Heart right ventricle (tissue), 16 donors: ENCODE measurements at regions of chr22 and their contacts with region 1.

Region 1: GRCh38 chr22:22687638-22688500 is 43.5 kb downstream of the GGTLC2 start:
- DNase-seq: peak in 1 of 2 donors; percentile 47
- ATAC-seq: peak in 5 of 8 donors; percentile 71 to 82 (median 77)
- H3K4me3 ChIP-seq: no peak overlapping the region
- H3K27ac ChIP-seq: no peak overlapping the region
- H3K4me1 ChIP-seq: peaks cover 0 to 5% (median 0%) of the 10 kb centered on the region in 9 donors
- H3K27me3 ChIP-seq: no peaks in the 10 kb centered on the region
- CTCF ChIP-seq: peak; percentile 48 to 81 (median 77)

Region 2: DNA sequence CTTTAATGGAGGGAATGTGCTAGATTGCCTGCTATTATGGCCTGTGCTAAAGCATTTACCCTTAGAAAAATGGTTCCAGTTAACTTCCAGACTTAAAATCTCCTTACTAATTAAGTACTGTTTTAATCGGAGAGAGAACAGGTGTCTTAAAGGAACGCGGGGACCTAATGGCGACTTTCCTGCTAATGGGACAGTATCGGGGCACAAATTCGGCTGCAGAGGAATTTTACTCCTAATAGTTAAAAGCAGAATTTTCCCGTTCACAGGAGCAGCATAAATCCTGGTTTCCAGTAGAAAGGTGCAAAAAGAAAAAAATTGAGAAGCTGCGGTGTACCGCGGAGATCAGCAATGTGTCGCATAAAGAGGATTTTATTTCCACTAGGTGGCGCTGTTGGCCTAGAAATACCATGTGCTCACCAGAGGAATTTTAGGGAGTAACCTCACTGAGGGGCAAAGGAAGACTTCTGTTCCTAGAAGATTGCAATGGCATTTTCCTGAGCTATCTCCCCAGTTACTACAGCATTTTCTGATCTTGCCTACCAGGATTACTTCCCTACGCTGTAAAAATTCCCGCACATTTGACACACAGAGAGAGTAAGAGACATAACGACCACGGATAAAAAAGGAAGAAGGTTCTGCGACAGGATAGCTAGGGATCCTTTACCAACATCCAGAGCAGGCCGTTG is 223.9 kb before region 1 on chr22:
- intact Hi-C with region 1: loop called in 1 of 10 experiments (anchors 5 kb)
- DNase-seq: peak in 1 of 2 donors; percentile 51
- ATAC-seq: peak in 5 of 8 donors; percentile 55 to 68 (median 60)
- H3K4me3 ChIP-seq: no peak overlapping the region
- H3K27ac ChIP-seq: no peak overlapping the region
- H3K4me1 ChIP-seq: no peaks in the 10 kb centered on the region
- H3K27me3 ChIP-seq: peaks cover 0 to 67% (median 50%) of the 10 kb centered on the region in 7 donors
- CTCF ChIP-seq: peak; percentile 61 to 85 (median 72)

Region 3: DNA sequence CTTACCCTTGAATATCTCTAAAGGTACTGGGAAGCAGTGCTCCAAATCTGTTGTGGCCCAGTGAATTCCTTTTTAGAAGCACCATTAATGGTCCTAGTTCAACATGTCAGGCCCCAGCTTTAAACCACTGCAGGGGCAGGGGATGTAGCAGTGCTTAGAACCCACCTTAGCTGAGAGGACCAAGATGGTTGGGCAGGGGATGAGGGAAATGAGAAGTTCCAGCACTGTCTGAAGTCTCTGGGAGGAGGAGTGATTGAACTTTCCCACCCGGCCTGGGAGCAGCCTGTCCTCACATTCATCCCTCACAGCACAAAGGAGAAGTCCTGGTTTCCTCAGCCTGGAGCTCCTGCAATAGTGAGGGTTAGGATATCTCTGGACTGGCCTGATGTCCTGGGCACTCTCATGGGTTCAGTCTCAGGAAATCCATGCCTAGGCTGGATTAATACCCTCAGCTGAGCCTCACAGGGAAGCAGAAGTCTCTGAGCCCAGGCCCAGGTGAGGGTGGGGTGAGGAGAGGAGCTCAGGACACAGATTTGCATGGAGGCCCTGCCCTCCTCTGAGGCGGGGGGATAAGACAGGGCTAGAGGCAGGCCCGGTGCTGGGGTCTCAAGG is 100.2 kb before region 1 on chr22:
- intact Hi-C with region 1: loop called in 6 of 10 experiments (anchors 5 to 10 kb)
- DNase-seq: no peak
- ATAC-seq: no peak
- H3K4me3 ChIP-seq: no peak overlapping the region
- H3K27ac ChIP-seq: no peak overlapping the region
- H3K4me1 ChIP-seq: no peaks in the 10 kb centered on the region
- H3K27me3 ChIP-seq: peaks cover 0 to 50% (median 14%) of the 10 kb centered on the region in 7 donors
- CTCF ChIP-seq: no peak

Region 4: DNA sequence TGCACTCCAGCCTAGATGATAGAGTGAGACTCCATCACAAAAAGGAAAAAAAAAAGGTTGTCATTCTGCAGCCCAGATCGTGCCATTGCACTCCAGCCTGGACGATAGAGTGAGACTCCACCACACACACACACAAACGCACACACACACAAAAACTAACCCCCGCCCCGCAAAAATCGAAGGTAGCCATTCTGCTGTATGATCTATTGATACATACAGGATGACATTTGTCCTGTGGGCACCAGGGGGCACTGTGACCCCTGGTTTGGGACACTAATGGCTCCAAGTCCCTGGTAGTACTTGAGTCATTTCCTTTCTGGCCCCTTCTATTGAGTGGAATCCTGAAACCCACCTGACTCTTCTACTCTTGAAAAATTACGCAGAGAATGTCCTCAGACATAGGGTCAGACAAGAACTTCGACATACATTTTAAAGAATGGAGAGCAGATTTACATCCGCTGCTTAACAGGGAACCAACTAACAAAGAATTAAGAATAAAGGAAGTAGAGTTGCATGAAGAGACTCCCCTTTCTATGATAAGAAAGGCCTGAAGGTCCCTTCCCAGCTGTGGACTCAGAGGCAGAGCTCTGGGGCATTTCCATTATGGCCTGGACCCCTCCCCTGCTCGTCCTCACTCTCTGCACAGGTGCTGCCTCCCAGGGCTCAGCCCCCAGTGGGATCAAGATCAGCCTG is 93.8 kb before region 1 on chr22:
- intact Hi-C with region 1: loop called in 6 of 10 experiments (anchors 5 to 10 kb)
- DNase-seq: peak in 1 of 2 donors; percentile 23
- ATAC-seq: no peak
- H3K4me3 ChIP-seq: no peak overlapping the region
- H3K27ac ChIP-seq: no peak overlapping the region
- H3K4me1 ChIP-seq: no peaks in the 10 kb centered on the region
- H3K27me3 ChIP-seq: peaks cover 0 to 28% (median 4%) of the 10 kb centered on the region in 7 donors
- CTCF ChIP-seq: peak; percentile 19 to 73 (median 56)

Region 5: DNA sequence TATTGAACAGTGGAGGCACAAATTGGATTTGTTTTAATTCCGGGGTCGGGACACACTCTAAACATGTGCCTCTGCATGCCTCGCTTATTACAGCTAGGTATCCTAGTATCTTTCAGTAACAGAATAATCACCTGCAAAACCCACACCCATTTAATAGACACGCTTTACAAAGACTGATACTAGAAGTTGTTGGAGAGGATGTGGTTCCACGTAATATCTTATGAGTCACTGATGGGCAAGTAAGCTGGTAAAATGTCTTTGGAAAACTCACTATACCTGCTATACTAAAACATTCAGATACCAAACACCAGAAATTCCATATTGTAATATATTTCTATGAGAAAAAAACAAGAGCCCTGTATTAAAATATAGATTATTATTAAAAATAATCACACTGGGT is 40.5 kb after region 1 on chr22:
- intact Hi-C with region 1: no loop called
- DNase-seq: no peak
- ATAC-seq: no peak
- H3K4me3 ChIP-seq: no peak overlapping the region
- H3K27ac ChIP-seq: no peak overlapping the region
- H3K4me1 ChIP-seq: peaks cover 0 to 4% (median 0%) of the 10 kb centered on the region in 9 donors
- H3K27me3 ChIP-seq: peaks cover 0 to 34% (median 23%) of the 10 kb centered on the region in 7 donors
- CTCF ChIP-seq: no peak

Region 6: GRCh38 chr22:22789233-22789921 is 101.5 kb after region 1 on chr22:
- intact Hi-C with region 1: no loop called
- DNase-seq: no peak
- ATAC-seq: no peak
- H3K4me3 ChIP-seq: no peak overlapping the region
- H3K27ac ChIP-seq: peak overlapping the region in 1 of 10 donors; percentile 77
- H3K4me1 ChIP-seq: peaks cover 0 to 11% (median 0%) of the 10 kb centered on the region in 9 donors
- H3K27me3 ChIP-seq: peaks cover 0 to 29% (median 27%) of the 10 kb centered on the region in 7 donors
- CTCF ChIP-seq: no peak

Region 7: DNA sequence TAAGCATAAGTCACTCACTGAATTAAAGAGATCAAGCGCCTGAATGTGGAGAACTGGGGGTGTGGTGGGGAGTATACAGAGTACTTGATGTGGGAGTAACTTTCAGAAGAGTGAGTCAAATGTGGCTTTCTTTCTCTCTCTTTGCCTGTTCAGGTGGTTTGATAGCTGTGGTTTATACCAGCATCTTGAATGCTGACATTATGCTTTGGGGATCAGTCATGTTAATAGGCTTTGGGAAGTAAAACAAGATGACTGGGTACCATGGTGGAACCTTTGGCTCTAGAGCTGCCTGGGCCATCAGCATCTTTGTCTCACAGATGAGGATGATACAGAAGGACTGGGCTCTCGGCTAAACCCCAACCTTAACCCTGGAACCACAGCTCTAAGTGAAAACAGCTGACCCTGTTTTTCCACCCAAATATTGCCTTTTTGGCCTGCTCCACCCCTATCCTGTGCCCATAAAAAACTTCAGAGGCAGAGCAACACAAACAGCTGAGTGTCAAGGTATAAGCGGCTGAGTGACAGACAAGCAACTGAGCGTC is 324.3 kb after region 1 on chr22:
- intact Hi-C with region 1: no loop called
- DNase-seq: no peak
- ATAC-seq: no peak
- H3K4me3 ChIP-seq: no peak overlapping the region
- H3K27ac ChIP-seq: no peak overlapping the region
- H3K4me1 ChIP-seq: no peaks in the 10 kb centered on the region
- H3K27me3 ChIP-seq: peaks cover 0 to 4% (median 0%) of the 10 kb centered on the region in 7 donors
- CTCF ChIP-seq: no peak